Right ventricle myocardium superior (tissue), 1 donor: ENCODE measurements at regions of chr17 and their contacts with region 1.

Region 1: DNA sequence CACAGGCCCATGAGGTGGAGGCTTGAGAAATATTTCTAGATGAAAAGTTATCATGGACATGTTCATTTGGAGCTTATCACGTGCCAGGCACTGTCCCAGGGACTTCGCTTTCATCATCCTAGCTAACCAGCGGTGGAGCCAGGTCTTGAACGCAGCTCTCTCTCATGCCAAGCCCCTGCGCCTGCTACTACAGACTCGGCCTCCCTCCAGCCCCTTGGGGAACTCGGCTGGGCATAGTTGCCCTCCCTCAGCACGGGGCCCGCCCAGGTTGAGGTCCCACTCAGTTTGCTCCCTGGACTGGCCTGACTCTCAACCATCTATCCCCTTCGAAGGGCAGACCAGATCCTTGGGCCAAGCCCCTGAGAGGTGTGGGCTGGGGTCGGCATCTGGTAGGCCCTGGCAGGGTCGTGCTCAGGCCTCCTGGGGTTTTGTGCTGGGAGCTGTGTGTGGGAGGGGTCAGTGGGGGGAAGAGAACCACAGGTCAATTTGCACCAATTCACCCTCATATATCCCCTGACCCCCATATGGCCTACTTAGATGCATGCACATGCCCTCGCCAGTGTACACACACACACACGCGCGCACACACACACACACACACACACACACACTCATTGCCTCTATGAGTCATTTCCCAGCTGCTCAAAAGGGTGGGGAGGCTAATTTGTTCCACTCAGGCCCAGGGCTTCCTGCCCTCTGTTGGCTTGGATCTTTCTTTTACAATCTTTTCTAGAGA is 12.1 kb upstream of the SCN4A start:
- DNase-seq: no peak
- ATAC-seq: peak; percentile 63

Region 2: GRCh38 chr17:63741221-63742049 is 243.4 kb before region 1 on chr17 and contains the start of gene STRADA:
- intact Hi-C with region 1: no loop called
- DNase-seq: peak; percentile 99
- ATAC-seq: peak; percentile 99
- total RNA-seq, gene STRADA: 14.7 TPM

Region 3: DNA sequence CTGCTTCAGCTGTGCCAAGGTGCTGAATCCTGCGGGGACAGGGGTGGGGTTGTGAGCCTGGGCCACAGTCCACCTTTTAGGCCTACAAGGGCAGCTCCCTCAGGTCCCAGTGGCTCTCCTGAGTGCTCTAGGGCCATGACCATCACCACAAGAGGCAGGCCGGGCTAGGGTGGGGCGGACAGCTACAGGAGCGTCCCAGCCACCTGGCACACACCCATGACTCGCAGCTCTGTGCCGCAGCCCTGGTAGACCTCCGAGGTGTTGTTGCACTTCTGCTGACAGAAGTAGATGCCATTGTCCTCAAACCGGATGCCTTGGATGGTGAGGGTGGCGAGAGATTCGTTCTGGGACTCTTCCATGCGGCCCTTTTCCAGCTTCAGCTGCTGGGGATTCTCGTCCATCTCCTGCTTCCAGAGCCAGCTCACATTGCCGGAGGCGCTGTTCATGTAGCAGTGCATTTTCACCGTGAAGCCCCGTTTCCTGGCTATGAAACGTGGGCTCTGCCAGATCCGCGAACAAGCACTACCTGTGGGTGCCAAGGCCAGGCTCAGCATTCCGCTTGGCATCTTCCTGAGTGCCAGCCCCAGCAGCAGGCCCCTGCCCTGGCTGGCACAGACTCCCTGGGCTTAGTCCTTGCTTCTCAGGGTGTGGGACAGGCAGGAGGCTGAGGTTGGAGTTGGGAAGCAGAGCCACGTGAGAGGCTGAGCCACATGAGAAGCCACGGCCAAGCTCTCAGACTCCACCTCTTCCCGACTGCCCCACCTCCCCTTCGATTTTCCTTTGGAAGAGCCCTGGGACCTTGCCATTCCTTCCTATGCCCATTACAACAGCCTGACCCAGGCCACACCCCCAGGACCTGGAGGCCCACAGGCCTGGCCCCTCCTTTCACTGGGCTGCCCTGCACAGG is 54.7 kb before region 1 on chr17:
- intact Hi-C with region 1: loop called (anchors 5 kb)
- DNase-seq: peak; percentile 50
- ATAC-seq: no peak